Activated CD4-positive, alpha-beta memory T cell treated with anti-CD3 and anti-CD28 coated beads for 36 hours (primary cell): ENCODE measurements at regions of chr1 and their contacts with region 1.

Region 1: DNA sequence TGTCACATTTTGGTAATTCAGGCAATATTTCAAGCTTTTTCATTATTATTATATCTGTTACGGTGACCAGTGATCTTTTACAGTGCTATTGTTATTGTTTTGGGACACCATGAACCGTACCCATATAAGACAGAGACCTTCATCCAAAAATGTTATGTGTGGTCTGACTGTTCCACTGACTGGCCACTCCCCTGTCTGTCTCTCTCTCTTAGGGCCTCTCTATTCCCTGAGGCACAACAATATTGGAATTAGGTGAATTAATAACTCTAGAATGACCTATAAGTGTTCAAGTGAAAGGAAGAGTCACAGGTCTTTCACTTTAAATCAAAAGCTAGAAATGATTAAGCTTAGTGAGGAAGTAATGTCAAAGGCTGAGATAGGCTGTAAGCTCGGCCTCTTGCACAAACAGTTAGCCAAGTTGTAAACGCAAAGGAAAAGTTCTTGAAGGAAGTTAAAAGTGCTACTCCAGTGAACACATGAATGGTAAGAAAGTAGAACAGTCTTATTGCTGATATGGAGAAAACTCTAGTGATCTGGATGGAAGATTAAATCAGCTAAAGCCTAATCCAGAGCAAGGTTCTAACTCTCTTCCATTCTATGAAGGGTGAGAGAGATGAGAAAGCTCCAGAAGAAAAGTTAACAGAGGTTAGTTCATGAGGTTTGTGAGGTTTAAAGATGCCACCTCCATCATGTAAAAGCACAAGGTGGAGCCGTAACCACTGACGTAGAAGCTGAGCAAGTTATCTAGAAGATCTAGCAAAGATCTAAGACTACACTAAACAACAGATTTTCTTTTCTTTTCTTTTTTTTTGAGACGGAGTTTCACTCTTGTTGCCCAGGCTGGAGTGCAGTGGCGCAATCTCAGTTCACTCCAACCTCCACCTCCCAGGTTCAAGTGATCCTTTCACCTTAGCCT is 19.7 kb upstream of the DIPK1A start:
- DNase-seq: peak; percentile 55
- H3K4me3 Mint-ChIP-seq: peak overlapping the region; percentile 58
- H3K27ac Mint-ChIP-seq: peak overlapping the region; percentile 98
- H3K4me1 Mint-ChIP-seq: peaks cover 58% of the 10 kb centered on the region
- H3K27me3 Mint-ChIP-seq: no peaks in the 10 kb centered on the region

Region 2: DNA sequence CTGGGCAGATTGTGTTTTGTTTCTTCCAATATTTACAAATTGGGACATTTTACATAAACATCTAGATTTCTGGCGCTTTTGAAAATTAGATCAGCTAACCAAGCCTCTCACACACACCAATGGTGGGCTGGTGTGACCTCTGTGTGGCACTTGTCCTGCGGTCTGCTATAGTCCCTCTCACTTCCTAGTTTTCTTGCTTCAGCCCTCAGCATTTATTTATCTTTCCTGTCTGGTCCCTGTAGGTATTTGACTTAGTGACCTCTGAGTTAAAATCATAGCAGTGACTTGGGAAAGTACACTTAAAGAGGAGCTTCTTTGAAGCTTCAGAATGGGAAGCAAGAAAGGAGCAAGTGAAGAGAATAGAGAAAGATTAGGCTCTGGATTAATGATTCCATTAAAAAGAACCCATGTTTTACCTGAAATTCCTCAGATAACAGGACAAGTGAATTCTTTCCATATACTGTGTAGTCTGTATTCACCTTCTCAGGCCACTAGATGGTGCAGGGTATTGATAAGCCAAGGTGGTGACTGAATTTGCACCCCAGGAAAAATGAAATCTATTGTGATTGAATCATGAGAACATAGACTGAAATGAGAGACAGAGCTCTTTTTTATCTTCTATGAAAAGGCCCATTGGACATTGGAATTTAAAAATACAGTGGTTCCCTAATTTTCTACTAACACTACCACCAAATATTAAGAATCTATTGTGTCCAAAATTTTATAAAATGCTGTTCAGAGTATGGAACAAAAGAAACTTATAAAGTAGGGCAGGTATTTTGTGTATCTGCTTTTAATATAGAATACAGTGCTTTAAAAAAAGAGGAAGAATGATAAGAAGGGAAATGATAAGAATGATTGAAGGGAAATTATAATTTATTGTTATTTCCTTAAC is 12.6 kb before region 1 on chr1:
- CTCF ChIA-PET with region 1: interaction called, 33 read pairs
- POLR2A ChIA-PET with region 1: interaction called, 6 read pairs
- intact Hi-C with region 1: loop called (anchors 1 kb)
- DNase-seq: no peak
- H3K4me3 Mint-ChIP-seq: no peak overlapping the region
- H3K27ac Mint-ChIP-seq: no peak overlapping the region
- H3K4me1 Mint-ChIP-seq: peaks cover 24% of the 10 kb centered on the region
- H3K27me3 Mint-ChIP-seq: no peaks in the 10 kb centered on the region

Region 3: DNA sequence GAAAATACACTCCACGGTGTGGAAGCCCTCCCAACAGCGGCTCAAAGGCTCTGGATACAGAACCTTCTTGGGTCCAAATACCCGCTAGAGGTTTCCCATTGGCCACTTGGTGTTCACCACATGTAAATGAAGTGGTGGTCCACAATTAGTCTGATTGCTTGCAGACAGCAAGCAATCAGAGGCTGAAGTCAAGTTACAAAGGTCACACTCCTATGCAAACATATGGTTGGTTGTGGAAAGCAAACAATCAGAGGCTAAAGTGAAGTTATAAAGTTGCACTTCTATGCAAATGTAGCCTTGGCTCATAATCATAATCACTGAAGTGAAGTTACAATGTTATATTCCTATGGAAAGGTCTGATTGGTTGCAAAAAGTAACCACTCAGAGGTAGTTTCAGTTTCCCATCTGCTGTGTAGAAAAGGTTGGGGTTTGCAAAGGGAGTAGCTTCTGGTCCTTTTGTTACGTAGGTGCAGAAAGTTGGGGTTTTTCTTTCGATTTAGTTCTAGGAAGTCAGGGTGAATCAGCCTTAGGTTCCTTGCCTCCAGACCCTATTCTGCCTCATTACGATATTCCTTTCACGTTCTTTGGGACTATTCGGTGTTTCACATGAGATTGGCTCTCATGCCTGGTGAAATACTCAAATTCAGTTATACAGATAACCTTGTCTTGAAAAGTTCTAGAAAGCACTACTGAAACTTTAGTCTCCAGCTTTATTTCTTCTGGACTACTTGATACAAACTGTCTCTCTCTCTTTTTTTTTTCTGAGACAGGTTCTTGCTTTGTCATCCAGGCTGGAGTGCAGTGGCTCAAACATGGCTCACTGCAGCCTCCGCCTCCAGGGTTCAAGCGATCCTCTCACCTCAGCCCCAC is 61.4 kb after region 1 on chr1:
- CTCF ChIA-PET with region 1: no interaction called
- POLR2A ChIA-PET with region 1: no interaction called
- intact Hi-C with region 1: loop called (anchors 5 kb)
- DNase-seq: peak; percentile 21
- H3K4me3 Mint-ChIP-seq: peak overlapping the region; percentile 71
- H3K27ac Mint-ChIP-seq: peak overlapping the region; percentile 88
- H3K4me1 Mint-ChIP-seq: peaks cover 28% of the 10 kb centered on the region
- H3K27me3 Mint-ChIP-seq: no peaks in the 10 kb centered on the region

Region 4: DNA sequence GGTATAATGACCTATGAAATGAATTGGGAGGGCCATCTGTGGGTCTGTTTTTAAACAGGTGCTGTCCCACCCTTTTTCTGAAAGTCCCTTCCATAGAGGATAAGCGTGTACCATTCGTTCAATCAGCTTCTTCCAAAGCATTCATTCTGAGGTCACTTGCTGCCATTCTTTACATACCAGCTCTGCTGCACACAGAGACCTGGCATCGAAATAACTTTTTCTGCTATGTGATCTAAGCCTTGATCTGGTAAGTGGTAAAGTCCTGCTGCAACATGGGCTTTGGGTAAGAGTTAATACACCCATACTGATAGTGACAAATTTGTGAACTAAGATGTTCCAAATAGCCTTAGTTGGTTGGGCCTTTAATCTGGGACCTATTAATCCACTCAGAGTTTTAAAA is 403.7 kb after region 1 on chr1:
- CTCF ChIA-PET with region 1: no interaction called
- POLR2A ChIA-PET with region 1: no interaction called
- intact Hi-C with region 1: no loop called
- DNase-seq: no peak
- H3K4me3 Mint-ChIP-seq: no peak overlapping the region
- H3K27ac Mint-ChIP-seq: no peak overlapping the region
- H3K4me1 Mint-ChIP-seq: no peaks in the 10 kb centered on the region
- H3K27me3 Mint-ChIP-seq: peaks cover 2% of the 10 kb centered on the region